ENCODE measurements at regions of chr2 and their contacts with region 1.

Region 1: DNA sequence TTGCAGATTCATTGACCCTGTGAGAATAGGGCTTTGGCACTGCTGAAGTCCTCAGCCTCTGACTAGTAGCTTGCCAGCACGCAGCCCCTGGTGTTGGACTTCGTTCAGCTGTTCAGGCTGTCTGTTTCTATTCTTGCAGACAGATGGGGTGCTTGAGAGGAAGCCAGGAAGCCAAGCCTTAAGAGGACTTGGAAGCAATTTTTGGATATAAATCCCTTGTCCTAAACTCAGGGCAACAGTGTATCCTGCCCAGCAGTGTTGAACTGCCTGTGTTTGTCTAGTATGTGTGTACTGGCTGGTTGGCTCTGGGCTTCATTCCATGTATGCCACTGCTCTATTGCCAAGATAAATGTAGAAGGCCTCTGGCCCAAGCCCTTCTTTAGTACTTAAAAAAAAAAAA is 108.6 kb downstream of the COMMD1 start:
- DNase-seq: peak; percentile 92
- H3K4me3 ChIP-seq: no peak overlapping the region
- H3K27ac ChIP-seq: peak overlapping the region; percentile 49 to 69 (median 62)
- H3K4me1 ChIP-seq: peaks cover 0 to 41% (median 27%) of the 10 kb centered on the region in 4 donors
- H3K27me3 ChIP-seq: no peaks in the 10 kb centered on the region
- CTCF ChIP-seq: peak in 3 of 4 experiments; percentile 26 to 48 (median 34)
- EP300 ChIP-seq: peak in 2 of 4 donors; percentile 3 to 19
- POLR2A ChIP-seq: no peak

Region 2: DNA sequence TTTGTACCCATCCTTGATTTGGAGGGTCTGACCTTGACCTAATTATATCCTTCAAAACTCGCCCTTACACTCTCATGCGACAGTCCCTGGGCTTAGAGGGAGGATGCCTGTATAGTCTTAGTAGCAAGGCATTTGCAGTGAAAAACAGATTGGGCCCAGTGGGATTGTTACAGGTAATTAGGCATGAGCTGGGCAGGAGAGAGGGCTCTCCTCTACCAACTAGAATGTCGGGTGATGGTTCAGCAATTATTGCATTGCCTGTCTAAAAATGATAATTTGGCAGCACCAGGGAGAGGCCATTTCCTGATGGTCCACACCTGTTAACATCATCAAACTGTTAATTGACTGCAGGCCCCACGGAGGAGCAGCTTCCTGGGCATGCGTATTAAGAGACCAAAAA is 76.2 kb before region 1 on chr2:
- intact Hi-C with region 1: no loop called
- DNase-seq: no peak
- H3K4me3 ChIP-seq: no peak overlapping the region
- H3K27ac ChIP-seq: no peak overlapping the region
- H3K4me1 ChIP-seq: peaks cover 0 to 8% (median 0%) of the 10 kb centered on the region in 4 donors
- H3K27me3 ChIP-seq: no peaks in the 10 kb centered on the region
- CTCF ChIP-seq: no peak
- EP300 ChIP-seq: no peak
- POLR2A ChIP-seq: no peak

Region 3: DNA sequence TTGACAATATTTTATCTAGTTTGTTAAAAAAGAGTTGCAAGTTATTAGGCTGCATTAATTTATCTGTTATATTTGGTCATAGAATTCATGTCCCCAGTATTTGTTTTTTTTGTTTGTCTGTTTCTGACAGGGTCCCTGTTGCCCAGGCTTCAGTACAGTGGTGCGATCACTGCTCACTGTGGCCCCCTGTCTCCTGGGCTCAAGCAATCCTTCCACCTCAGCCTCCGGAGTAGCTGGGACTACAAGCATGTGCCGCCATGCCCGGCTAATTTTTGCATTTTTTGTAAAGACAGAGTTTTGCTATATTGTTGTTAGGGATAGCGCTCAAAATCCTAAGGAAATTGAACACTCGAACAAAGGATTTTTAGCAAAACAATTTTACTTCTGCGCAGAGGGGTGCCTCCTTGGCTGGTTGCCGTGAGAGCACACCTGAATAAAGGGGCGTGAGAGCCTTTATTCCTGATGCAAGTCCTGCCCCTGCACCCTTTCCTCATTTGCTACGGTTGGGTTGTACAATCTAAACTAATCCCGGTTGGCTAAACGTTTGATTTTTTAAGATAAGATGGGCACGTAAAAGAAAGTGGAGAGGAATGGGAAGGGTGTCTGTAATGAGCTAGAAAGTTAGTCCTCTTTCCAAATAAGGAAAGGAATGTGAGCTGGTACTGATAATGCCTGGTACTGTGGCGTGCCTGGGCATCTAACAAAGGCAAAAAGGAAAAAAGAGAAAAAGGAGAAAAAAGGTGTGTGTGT is 43.1 kb before region 1 on chr2:
- intact Hi-C with region 1: no loop called
- DNase-seq: no peak
- H3K4me3 ChIP-seq: peak overlapping the region in 3 of 4 donors; percentile 26 to 35 (median 30)
- H3K27ac ChIP-seq: peak overlapping the region; percentile 47 to 67 (median 60)
- H3K4me1 ChIP-seq: peaks cover 0 to 39% (median 26%) of the 10 kb centered on the region in 4 donors
- H3K27me3 ChIP-seq: no peaks in the 10 kb centered on the region
- CTCF ChIP-seq: no peak
- EP300 ChIP-seq: no peak
- POLR2A ChIP-seq: no peak

Region 4: GRCh38 chr2:62071126-62071598 is 57.1 kb after region 1 on chr2:
- intact Hi-C with region 1: loop called (anchors 5 kb)
- DNase-seq: no peak
- H3K4me3 ChIP-seq: no peak overlapping the region
- H3K27ac ChIP-seq: peak overlapping the region in 2 of 4 donors; percentile 44 to 62
- H3K4me1 ChIP-seq: peaks cover 0 to 40% (median 18%) of the 10 kb centered on the region in 4 donors
- H3K27me3 ChIP-seq: no peaks in the 10 kb centered on the region
- CTCF ChIP-seq: no peak
- EP300 ChIP-seq: peak in 3 of 4 donors; percentile 43 to 84 (median 70)
- POLR2A ChIP-seq: no peak

Region 5: GRCh38 chr2:62099523-62100175 is 85.5 kb after region 1 on chr2:
- intact Hi-C with region 1: no loop called
- DNase-seq: no peak
- H3K4me3 ChIP-seq: no peak overlapping the region
- H3K27ac ChIP-seq: no peak overlapping the region
- H3K4me1 ChIP-seq: peaks cover 0 to 3% (median 1%) of the 10 kb centered on the region in 4 donors
- H3K27me3 ChIP-seq: no peaks in the 10 kb centered on the region
- CTCF ChIP-seq: no peak
- EP300 ChIP-seq: no peak
- POLR2A ChIP-seq: no peak

Region 6: DNA sequence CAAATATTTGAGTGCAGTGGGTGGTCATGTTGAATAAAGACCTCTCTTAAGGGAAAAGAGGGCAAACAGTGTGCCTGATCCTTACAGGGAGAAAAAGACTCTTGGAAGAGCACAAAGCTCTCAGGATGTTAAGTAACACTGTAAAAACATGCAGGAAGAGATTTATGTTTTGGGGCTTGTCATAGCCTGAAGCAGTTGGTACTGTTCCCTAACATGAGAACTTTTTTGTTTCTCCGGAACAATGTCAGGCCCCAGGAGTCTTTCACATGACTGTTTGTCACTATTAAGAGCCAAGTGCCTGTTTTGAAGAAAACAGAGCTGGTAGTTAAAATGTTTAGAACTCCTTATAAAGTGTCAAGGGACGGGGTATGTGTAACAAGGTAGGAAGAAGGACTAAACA is 98.1 kb after region 1 on chr2:
- intact Hi-C with region 1: loop called (anchors 10 kb)
- DNase-seq: no peak
- H3K4me3 ChIP-seq: no peak overlapping the region
- H3K27ac ChIP-seq: peak overlapping the region in 3 of 4 donors; percentile 54 to 63 (median 59)
- H3K4me1 ChIP-seq: peaks cover 0 to 24% (median 21%) of the 10 kb centered on the region in 4 donors
- H3K27me3 ChIP-seq: no peaks in the 10 kb centered on the region
- CTCF ChIP-seq: no peak
- EP300 ChIP-seq: peak in 1 of 4 donors; percentile 57
- POLR2A ChIP-seq: no peak

Region 7: GRCh38 chr2:62293490-62294271 is 279.6 kb after region 1 on chr2:
- intact Hi-C with region 1: loop called (anchors 5 kb)
- DNase-seq: peak; percentile 82
- H3K4me3 ChIP-seq: peak overlapping the region in 3 of 4 donors; percentile 5 to 11 (median 7)
- H3K27ac ChIP-seq: peak overlapping the region; percentile 68 to 75 (median 72)
- H3K4me1 ChIP-seq: peaks cover 0 to 39% (median 27%) of the 10 kb centered on the region in 4 donors
- H3K27me3 ChIP-seq: no peaks in the 10 kb centered on the region
- CTCF ChIP-seq: no peak
- EP300 ChIP-seq: no peak
- POLR2A ChIP-seq: no peak

Region 8: GRCh38 chr2:62410015-62410453 is 395.9 kb after region 1 on chr2:
- intact Hi-C with region 1: loop called (anchors 5 kb)
- DNase-seq: no peak
- H3K4me3 ChIP-seq: no peak overlapping the region
- H3K27ac ChIP-seq: peak overlapping the region in 2 of 4 donors; percentile 4 to 79
- H3K4me1 ChIP-seq: peaks cover 0 to 28% (median 23%) of the 10 kb centered on the region in 4 donors
- H3K27me3 ChIP-seq: no peaks in the 10 kb centered on the region
- CTCF ChIP-seq: no peak
- EP300 ChIP-seq: no peak
- POLR2A ChIP-seq: no peak

Region 9: DNA sequence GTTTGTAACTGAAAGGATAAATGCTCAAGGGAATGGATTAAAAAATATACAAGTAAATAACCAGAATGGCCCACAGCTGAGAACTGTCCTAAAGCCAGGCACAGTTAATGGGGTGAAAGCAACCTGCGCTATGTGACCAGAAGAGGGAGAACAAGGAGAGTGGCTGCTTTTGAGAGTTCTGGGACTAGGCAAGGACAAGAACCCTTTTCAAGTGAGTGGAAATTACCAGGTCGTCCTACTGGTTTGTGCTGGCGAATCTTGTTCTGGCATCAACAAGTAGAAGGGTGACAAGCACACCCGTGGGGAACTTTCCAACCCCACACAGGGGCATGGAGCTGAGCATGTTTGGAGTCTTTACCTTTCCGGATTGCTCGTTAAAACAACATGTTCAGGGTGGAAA is 409.1 kb after region 1 on chr2:
- intact Hi-C with region 1: no loop called
- DNase-seq: no peak
- H3K4me3 ChIP-seq: no peak overlapping the region
- H3K27ac ChIP-seq: no peak overlapping the region
- H3K4me1 ChIP-seq: no peaks in the 10 kb centered on the region
- H3K27me3 ChIP-seq: no peaks in the 10 kb centered on the region
- CTCF ChIP-seq: no peak
- EP300 ChIP-seq: no peak
- POLR2A ChIP-seq: no peak